Ascending aorta (tissue), 2 donors: ENCODE measurements at regions of chrX and their contacts with region 1.

Region 1: GRCh38 chrX:109732780-109733657 is at the start of gene ACSL4:
- DNase-seq: peak; percentile 44 to 90
- H3K4me3 ChIP-seq: peak within 1 kb of the TSS; percentile 52 to 67
- H3K27ac ChIP-seq: peak within 1 kb of the TSS; percentile 78 to 82
- H3K4me1 ChIP-seq: no peaks in the 10 kb centered on the region
- H3K27me3 ChIP-seq: no peaks in the 10 kb centered on the region
- CTCF ChIP-seq: no peak
- total RNA-seq, gene ACSL4: 18.5 TPM

Region 2: DNA sequence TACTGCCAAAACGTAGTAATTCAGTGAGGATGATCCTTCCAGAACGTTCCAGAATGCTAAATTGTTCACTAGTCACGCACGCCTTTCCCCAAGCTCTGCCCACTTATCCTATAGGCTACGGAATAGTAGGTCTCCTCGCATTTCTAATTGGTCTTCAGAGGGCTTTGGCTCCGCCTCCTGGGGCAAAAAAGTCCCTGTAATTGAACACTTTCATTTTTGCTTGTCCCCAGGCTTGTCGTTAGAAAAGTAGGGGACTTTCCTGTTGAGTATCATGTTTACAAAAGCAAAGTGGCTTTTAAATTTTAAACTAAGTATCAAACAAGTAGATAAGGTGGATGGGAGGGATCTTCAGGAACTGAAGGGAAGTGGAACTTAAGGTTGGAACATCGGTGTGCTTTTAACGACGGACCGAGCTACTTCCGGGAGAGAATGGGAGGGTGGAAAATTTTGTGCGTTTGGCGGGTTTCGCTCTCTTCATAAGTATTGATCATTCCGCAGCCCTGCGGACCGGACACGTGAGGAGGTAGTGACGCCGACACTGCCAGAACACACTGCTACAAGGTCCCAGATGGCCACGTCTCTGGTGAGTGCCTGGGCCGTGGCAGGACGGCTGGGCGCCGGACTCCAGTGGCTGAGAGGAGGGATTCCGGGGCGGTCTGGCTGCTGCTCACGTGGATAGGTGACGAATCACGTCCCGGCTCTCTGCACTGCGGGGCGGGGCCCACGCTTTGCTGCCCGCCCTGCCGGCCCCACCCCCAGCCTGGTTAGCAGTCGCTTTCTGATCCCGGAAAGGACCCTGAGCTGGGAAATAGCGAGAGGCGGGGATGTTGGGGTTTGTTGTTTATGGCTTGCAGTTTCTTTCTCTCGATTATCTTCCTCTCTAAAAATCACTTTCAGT is 196.3 kb before region 1 on chrX and contains the start of gene NXT2:
- intact Hi-C with region 1: loop called (anchors 1 kb)
- DNase-seq: peak; percentile 67 to 93
- H3K4me3 ChIP-seq: peak within 1 kb of the TSS; percentile 55 to 66
- H3K27ac ChIP-seq: peak within 1 kb of the TSS; percentile 86 to 89
- H3K4me1 ChIP-seq: no peaks in the 10 kb centered on the region
- H3K27me3 ChIP-seq: no peaks in the 10 kb centered on the region
- CTCF ChIP-seq: no peak
- total RNA-seq, gene NXT2: 1.8 TPM

Region 3: GRCh38 chrX:109654516-109655109 is 78.4 kb before region 1 on chrX:
- intact Hi-C with region 1: no loop called
- DNase-seq: no peak
- H3K4me3 ChIP-seq: no peak overlapping the region
- H3K27ac ChIP-seq: no peak overlapping the region
- H3K4me1 ChIP-seq: no peaks in the 10 kb centered on the region
- H3K27me3 ChIP-seq: no peaks in the 10 kb centered on the region
- CTCF ChIP-seq: no peak

Region 4: DNA sequence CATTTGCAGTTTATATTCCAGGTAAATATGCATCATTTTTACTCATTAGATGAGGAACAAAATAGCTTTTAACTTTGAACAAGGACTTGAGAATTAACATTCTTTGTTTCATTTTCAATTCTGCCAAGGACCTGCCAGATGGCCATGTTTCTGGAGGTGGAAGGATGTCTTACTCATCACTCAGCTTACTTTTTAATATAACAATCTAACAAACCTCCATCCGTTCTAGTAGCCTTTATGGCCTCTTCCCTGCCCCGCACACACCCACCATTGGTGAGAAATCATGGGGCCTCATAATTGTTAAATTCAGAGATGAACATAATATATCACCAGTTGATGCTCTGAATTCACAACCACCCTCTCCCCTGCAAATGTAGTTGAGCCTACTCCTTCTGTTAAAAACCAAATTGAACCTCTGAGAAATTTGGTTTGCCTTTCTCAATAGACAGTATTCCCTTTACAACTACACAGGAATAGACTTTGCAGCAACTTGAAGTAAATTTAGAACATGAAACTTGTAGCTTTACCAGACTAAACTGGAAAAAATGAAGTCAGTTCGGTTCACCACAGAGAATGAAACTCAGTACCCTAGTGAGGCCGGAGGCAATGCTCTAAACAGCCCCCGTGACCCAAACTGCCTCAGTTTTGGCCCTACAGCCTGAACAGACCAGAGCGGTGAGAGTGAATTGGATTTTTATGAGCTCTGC is 50.1 kb after region 1 on chrX:
- intact Hi-C with region 1: loop called (anchors 5 kb)
- DNase-seq: no peak
- H3K4me3 ChIP-seq: no peak overlapping the region
- H3K27ac ChIP-seq: peak overlapping the region; percentile 56 to 59
- H3K4me1 ChIP-seq: no peaks in the 10 kb centered on the region
- H3K27me3 ChIP-seq: no peaks in the 10 kb centered on the region
- CTCF ChIP-seq: no peak

Region 5: GRCh38 chrX:109840585-109840984 is 107.6 kb after region 1 on chrX:
- intact Hi-C with region 1: loop called (anchors 5 kb)
- DNase-seq: peak in 1 of 2 donors; percentile 79
- H3K4me3 ChIP-seq: no peak overlapping the region
- H3K27ac ChIP-seq: peak overlapping the region; percentile 44 to 55
- H3K4me1 ChIP-seq: peaks cover 0 to 4% of the 10 kb centered on the region in 2 donors
- H3K27me3 ChIP-seq: no peaks in the 10 kb centered on the region
- CTCF ChIP-seq: no peak